Dendritic cell treated with granulocyte-macrophage colony-stimulating factor and Interleukin-4, amounts not matched to agents 40 ng/mL and 50 ng/mL, for 4 days (primary cell): ENCODE measurements at regions of chr20 and their contacts with region 1.

Region 1: DNA sequence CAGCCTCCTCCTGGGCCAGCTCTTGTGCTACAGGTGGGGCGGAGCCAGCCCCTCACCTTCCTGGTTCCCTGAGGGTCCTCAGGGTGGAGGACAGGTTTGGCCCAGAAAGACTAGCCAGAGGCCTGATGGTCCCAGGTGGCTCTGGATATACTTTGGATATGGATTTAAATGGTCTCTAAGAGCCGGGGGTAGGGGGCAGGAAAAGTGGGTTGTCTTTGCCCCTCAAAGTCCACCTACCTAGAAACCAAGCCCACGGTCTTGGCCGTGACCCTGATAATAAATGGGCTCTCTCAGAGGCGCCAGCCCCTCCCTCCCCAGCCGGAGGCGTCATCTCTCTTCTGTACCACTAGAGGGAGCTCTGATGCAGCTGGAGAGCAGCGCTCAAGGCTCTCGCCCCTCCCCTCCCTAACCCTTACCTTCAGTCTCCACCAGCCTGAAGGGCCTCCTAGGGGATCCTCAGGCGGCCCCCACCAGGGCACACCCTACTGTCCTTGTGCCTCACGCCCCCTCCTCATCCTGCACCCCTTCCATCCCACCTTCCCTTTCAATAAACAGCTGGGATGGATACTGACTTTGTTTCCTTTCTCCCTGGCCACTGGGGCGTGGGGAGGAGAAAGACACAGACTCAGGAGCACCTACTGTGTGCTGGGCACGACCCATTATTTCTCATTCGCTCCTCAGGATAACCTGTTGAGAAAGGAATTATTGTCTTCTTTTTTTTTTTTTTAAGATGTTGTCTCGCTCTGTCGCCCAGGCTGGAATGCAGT is 7.6 kb downstream of the NRSN2 start:
- H3K4me3 Mint-ChIP-seq: no peak overlapping the region
- H3K27ac Mint-ChIP-seq: no peak overlapping the region
- H3K4me1 Mint-ChIP-seq: no peaks in the 10 kb centered on the region
- H3K27me3 Mint-ChIP-seq: no peaks in the 10 kb centered on the region

Region 2: DNA sequence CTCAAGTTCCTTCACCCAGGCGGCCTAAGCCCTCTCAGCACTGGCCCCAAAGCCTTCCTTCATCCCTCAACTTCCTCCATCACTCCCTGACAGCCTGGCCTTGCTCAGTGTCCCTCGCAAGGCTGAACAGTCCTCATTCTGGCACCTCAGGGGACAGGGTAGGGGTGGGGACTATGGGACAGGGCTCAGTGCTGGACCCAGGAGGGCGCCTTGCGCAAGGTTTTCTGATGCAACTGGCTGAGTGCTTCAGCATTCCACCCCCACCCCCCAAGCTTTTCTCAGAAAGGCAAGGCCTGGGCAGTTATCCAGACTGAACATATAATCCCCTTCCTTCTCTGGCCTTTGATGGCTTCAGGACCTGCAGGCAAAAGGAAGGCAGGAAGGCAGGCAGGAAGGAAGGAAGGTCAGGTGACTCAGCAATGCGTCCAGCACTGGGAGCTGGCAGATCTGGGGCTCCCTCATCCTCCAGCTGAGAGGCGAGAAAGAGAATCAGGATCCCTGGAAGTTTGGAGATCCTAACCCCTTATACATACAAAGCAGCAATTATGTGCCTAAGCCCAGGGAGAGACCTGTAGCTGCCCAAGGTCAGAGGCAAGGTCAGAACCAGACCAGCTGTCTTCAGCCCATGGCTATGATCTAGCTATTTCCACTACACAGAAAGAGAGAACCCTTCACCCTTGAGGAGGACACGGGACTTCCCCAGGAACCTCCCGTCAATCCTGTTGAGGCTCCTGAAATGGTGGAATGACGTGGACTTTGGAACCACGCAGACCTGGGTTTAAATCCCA is 17.5 kb after region 1 on chr20:
- intact Hi-C with region 1: loop called (anchors 2 kb)
- H3K4me3 Mint-ChIP-seq: no peak overlapping the region
- H3K27ac Mint-ChIP-seq: peak overlapping the region; percentile 81
- H3K4me1 Mint-ChIP-seq: peaks cover 37% of the 10 kb centered on the region
- H3K27me3 Mint-ChIP-seq: no peaks in the 10 kb centered on the region

Region 3: DNA sequence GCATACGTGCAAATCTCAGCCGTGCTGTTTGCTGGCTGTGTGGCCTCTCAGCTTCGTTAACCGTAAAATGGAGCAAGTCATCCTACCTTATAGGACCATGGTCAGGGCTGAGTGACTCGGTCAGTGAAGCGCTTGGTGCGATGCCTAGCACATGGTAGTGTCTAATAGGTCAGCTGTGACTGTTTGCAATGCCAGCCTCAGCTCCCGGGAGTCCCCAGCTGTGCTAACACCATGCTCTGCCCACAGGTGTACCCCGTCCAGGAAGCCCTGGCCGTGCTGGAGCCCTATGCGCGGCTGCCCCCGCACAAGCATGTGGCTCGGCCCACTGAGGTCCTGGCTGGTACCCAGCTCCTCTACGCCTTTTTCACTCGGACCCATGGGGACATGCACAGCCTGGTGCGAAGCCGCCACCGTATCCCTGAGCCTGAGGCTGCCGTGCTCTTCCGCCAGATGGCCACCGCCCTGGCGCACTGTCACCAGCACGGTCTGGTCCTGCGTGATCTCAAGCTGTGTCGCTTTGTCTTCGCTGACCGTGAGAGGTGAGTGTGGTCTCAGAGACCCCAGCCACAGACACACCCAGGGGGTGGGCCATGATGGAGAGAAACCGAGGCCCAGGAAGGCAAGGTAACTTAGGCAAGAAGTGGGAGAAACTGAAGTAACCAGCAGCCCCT is 36.7 kb after region 1 on chr20:
- intact Hi-C with region 1: no loop called
- H3K4me3 Mint-ChIP-seq: no peak overlapping the region
- H3K27ac Mint-ChIP-seq: no peak overlapping the region
- H3K4me1 Mint-ChIP-seq: no peaks in the 10 kb centered on the region
- H3K27me3 Mint-ChIP-seq: no peaks in the 10 kb centered on the region

Region 4: GRCh38 chr20:407133-407952 is 52.9 kb after region 1 on chr20:
- intact Hi-C with region 1: loop called (anchors 10 kb)
- H3K4me3 Mint-ChIP-seq: peak overlapping the region; percentile 69
- H3K27ac Mint-ChIP-seq: peak overlapping the region; percentile 76
- H3K4me1 Mint-ChIP-seq: peaks cover 37% of the 10 kb centered on the region
- H3K27me3 Mint-ChIP-seq: peaks cover 8% of the 10 kb centered on the region

Region 5: GRCh38 chr20:431012-431904 is 76.8 kb after region 1 on chr20:
- intact Hi-C with region 1: loop called (anchors 2 kb)
- H3K4me3 Mint-ChIP-seq: no peak overlapping the region
- H3K27ac Mint-ChIP-seq: no peak overlapping the region
- H3K4me1 Mint-ChIP-seq: peaks cover 19% of the 10 kb centered on the region
- H3K27me3 Mint-ChIP-seq: no peaks in the 10 kb centered on the region

Region 6: GRCh38 chr20:478949-479429 is 124.5 kb after region 1 on chr20:
- intact Hi-C with region 1: loop called (anchors 1 kb)
- H3K4me3 Mint-ChIP-seq: no peak overlapping the region
- H3K27ac Mint-ChIP-seq: no peak overlapping the region
- H3K4me1 Mint-ChIP-seq: no peaks in the 10 kb centered on the region
- H3K27me3 Mint-ChIP-seq: no peaks in the 10 kb centered on the region

Region 7: GRCh38 chr20:645318-646106 is 291.0 kb after region 1 on chr20:
- intact Hi-C with region 1: loop called (anchors 10 kb)
- H3K4me3 Mint-ChIP-seq: no peak overlapping the region
- H3K27ac Mint-ChIP-seq: peak overlapping the region; percentile 73
- H3K4me1 Mint-ChIP-seq: peaks cover 46% of the 10 kb centered on the region
- H3K27me3 Mint-ChIP-seq: peaks cover 26% of the 10 kb centered on the region

Region 8: DNA sequence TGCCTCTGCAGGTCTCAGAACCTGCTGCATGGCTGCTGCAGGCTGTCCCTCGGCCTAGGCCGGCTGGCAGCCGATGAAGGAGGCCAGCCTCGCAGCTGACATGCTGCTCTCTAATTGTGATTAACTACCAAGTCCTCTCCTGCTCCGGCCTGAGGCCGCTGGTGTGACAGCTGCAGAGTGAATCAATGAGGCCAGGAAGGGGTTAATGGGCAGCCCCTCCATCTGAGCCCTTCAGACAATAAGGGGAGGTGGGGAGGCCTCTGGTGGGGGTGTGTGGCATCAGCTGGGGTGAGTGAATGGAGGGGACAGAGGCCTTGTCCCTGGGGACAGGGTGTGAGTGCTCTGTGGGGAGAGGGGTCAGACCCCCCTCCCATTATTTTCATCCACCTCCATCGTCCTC is 379.4 kb after region 1 on chr20:
- intact Hi-C with region 1: loop called (anchors 10 kb)
- H3K4me3 Mint-ChIP-seq: no peak overlapping the region
- H3K27ac Mint-ChIP-seq: no peak overlapping the region
- H3K4me1 Mint-ChIP-seq: peaks cover under 1% of the 10 kb centered on the region
- H3K27me3 Mint-ChIP-seq: peaks cover 28% of the 10 kb centered on the region